GM18951 (cell line): ENCODE measurements at regions of chr10 and their contacts with region 1.

Region 1: GRCh38 chr10:126504063-126504739 is 115.9 kb upstream of the ADAM12 start:
- POLR2A ChIP-seq: no peak

Region 2: DNA sequence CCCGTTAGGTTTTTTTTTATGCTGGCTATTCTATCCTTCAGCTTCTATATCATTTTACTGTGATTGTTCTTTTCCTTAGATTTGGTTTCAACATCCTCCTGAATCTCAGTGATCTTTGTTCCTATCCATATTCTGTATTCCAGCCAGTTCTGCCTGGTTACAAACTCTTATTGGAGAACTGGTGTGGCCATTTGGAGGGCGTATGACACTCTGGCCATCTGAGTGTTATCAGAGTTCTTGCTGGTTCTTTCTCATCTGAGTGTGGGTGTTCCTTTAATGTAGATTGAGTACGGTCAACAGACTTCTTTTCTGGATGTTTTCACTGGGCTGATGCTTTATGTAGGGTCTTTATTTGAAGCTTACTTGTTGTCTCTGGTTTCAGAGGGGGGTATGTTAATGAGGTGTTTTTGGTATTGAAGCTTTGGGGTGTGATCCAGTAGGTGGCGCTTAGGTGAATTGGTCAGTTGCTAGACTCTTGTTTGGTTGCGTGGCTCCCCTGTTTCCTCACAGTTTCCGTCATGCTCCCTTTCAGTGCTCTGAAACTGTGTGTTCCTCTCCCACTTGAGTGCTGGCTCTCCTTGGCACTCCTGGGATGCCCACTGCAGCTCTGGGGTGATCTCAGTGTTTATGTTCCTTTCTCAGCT is 527.1 kb before region 1 on chr10:
- in situ Hi-C with region 1: loop called (anchors 10 kb)
- POLR2A ChIP-seq: no peak

Region 3: GRCh38 chr10:126969310-126969709 is 465.1 kb after region 1 on chr10:
- in situ Hi-C with region 1: no loop called
- POLR2A ChIP-seq: no peak